H1 (cell line): ENCODE measurements at regions of chr3 and their contacts with region 1.

Region 1: GRCh38 chr3:48623851-48624547 is 2.4 kb upstream of the TMEM89 start:
- DNase-seq: no peak
- H3K4me3 ChIP-seq: no peak overlapping the region
- H3K27ac ChIP-seq: peak overlapping the region; percentile 35; the same call in 1 of the 2 replicates
- H3K4me1 ChIP-seq: peaks cover 0 to 6% (median 3%) of the 10 kb centered on the region in 4 experiments; a peak in 3 of 7 replicates
- H3K27me3 ChIP-seq: no peaks in the 10 kb centered on the region
- CTCF ChIP-seq: no peak
- EP300 ChIP-seq: no peak
- POLR2A ChIP-seq: peak in 1 of 2 experiments; percentile 9; a peak in 1 of 3 replicates
- RAD21 ChIP-seq: no peak

Region 2: GRCh38 chr3:48609088-48610005 is 14.7 kb before region 1 on chr3 and contains the start of gene UQCRC1:
- CTCF ChIA-PET with region 1: interaction called, 7 read pairs
- POLR2A ChIA-PET with region 1: interaction called, 75 read pairs
- DNase-seq: peak; percentile 88 to 93
- H3K4me3 ChIP-seq: peak within 1 kb of the TSS; percentile 79 to 99 (median 91)
- H3K27ac ChIP-seq: peak within 1 kb of the TSS; percentile 85
- H3K4me1 ChIP-seq: peaks cover 0 to 2% (median under 1%) of the 10 kb centered on the region in 4 experiments; a peak in 2 of 7 replicates
- H3K27me3 ChIP-seq: no peaks in the 10 kb centered on the region
- CTCF ChIP-seq: peak; percentile 64 to 74 (median 71)
- EP300 ChIP-seq: no peak
- POLR2A ChIP-seq: peak; percentile 85 to 87
- RAD21 ChIP-seq: peak in 1 of 2 experiments; percentile 38; a peak in 3 of 4 replicates
- total RNA-seq, gene UQCRC1: 310 TPM in 2 replicates